Aorta (tissue), 5 donors: ENCODE measurements at regions of chr6 and their contacts with region 1.

Region 1: GRCh38 chr6:51959744-51960383 is 127.5 kb downstream of the PKHD1 start:
- DNase-seq: peak; percentile 61 to 86
- ATAC-seq: no peak
- H3K4me3 ChIP-seq: no peak overlapping the region
- H3K27ac ChIP-seq: no peak overlapping the region
- H3K4me1 ChIP-seq: no peaks in the 10 kb centered on the region
- H3K27me3 ChIP-seq: no peaks in the 10 kb centered on the region

Region 2: DNA sequence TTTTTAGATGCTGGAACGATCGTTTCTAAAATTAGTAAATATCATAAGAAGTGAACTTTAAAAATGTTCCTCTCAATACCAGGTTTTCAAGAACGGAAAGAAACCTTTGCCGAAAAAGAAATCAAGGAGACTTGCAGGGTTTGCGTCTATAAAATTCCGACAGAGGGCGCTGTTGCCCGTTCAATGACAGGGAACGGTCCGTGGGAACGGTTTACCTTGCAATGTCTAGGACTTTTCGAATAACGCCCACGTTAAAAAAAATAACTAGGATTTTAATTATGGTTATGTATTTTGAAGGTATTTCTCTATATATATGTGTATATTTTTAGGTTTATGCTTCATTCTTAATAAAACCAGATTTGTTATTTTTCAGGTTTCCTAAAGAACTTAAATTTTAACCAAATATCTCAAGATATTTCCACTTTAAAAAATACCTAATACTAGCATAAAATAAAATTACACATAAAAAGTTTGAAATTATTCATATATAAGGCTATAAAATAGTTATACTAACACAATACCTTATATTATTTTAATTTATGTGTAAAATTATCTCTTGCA is 1143.7 kb before region 1 on chr6:
- intact Hi-C with region 1: loop called in 1 of 2 experiments (anchors 5 kb)
- DNase-seq: peak; percentile 57 to 84
- ATAC-seq: no peak
- H3K4me3 ChIP-seq: peak overlapping the region in 1 of 2 donors; percentile 57
- H3K27ac ChIP-seq: no peak overlapping the region
- H3K4me1 ChIP-seq: no peaks in the 10 kb centered on the region
- H3K27me3 ChIP-seq: no peaks in the 10 kb centered on the region

Region 3: GRCh38 chr6:51753635-51754034 is 206.2 kb before region 1 on chr6:
- intact Hi-C with region 1: no loop called
- DNase-seq: no peak
- ATAC-seq: no peak
- H3K4me3 ChIP-seq: no peak overlapping the region
- H3K27ac ChIP-seq: no peak overlapping the region
- H3K4me1 ChIP-seq: no peaks in the 10 kb centered on the region
- H3K27me3 ChIP-seq: no peaks in the 10 kb centered on the region

Region 4: GRCh38 chr6:51855310-51856082 is 104.4 kb before region 1 on chr6:
- intact Hi-C with region 1: loop called (anchors 1 to 5 kb)
- DNase-seq: no peak
- ATAC-seq: no peak
- H3K4me3 ChIP-seq: no peak overlapping the region
- H3K27ac ChIP-seq: no peak overlapping the region
- H3K4me1 ChIP-seq: no peaks in the 10 kb centered on the region
- H3K27me3 ChIP-seq: no peaks in the 10 kb centered on the region